Transverse colon (tissue), 4 donors: ENCODE measurements at regions of chrX and their contacts with region 1.

Region 1: DNA sequence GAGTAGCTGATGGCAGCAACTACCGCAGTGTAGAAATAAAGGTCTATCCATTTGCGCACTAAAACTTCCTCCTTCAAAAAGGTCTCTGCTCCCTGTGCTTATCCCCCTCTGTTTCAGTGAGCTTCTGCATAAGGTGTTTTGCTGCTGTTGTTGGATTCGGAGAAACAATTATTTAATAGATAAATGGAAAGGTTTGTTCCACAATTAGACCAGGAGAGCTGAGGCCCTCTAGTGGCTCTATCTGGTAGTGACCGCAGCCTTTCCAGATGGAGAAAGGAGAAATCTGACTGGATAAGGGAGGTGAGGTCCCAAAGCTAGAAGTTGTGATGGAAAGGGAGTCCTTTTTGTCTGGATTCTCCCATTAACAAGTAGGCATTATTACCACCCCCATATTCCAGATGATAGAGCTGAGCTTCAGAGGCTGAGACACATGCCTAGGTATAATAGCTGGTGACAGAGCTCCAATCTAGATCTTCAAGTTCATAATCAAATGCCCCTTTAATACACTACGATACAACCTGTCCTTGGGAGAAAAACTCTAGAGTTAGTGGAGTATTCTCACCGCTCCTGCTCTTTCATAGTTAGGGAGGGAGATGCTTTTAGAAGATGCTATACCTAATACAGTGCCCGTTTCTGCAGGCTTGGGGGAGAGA is 5.1 kb upstream of the GABRQ start:
- DNase-seq: peak; percentile 47
- H3K4me3 ChIP-seq: no peak overlapping the region
- H3K27ac ChIP-seq: no peak overlapping the region
- H3K4me1 ChIP-seq: no peaks in the 10 kb centered on the region
- H3K27me3 ChIP-seq: peaks cover 8% of the 10 kb centered on the region
- CTCF ChIP-seq: peak; percentile 49 to 79 (median 58)
- EP300 ChIP-seq: no peak
- POLR2A ChIP-seq: no peak

Region 2: GRCh38 chrX:151724563-151725337 is 907.8 kb before region 1 on chrX:
- in situ Hi-C with region 1: loop called in 2 of 4 experiments (anchors 25 kb)
- intact Hi-C with region 1: no loop called
- DNase-seq: no peak
- H3K4me3 ChIP-seq: no peak overlapping the region
- H3K27ac ChIP-seq: no peak overlapping the region
- H3K4me1 ChIP-seq: no peaks in the 10 kb centered on the region
- H3K27me3 ChIP-seq: no peaks in the 10 kb centered on the region
- CTCF ChIP-seq: no peak
- EP300 ChIP-seq: no peak
- POLR2A ChIP-seq: no peak

Region 3: GRCh38 chrX:151745651-151746050 is 886.9 kb before region 1 on chrX:
- in situ Hi-C with region 1: loop called (anchors 10 to 25 kb)
- intact Hi-C with region 1: loop called (anchors 5 kb)
- DNase-seq: no peak
- H3K4me3 ChIP-seq: no peak overlapping the region
- H3K27ac ChIP-seq: no peak overlapping the region
- H3K4me1 ChIP-seq: no peaks in the 10 kb centered on the region
- H3K27me3 ChIP-seq: no peaks in the 10 kb centered on the region
- CTCF ChIP-seq: no peak
- EP300 ChIP-seq: no peak
- POLR2A ChIP-seq: no peak

Region 4: GRCh38 chrX:151753313-151754041 is 879.1 kb before region 1 on chrX:
- in situ Hi-C with region 1: loop called (anchors 10 to 25 kb)
- intact Hi-C with region 1: loop called (anchors 5 kb)
- DNase-seq: peak; percentile 28
- H3K4me3 ChIP-seq: no peak overlapping the region
- H3K27ac ChIP-seq: no peak overlapping the region
- H3K4me1 ChIP-seq: no peaks in the 10 kb centered on the region
- H3K27me3 ChIP-seq: no peaks in the 10 kb centered on the region
- CTCF ChIP-seq: peak; percentile 59 to 67 (median 61)
- EP300 ChIP-seq: no peak
- POLR2A ChIP-seq: no peak